Right ventricle myocardium superior (tissue), 1 donor: ENCODE measurements at regions of chr9 and their contacts with region 1.

Region 1: GRCh38 chr9:109779711-109780452 is at the start of gene PALM2AKAP2:
- DNase-seq: peak; percentile 86
- ATAC-seq: peak; percentile 95
- total RNA-seq, gene PALM2AKAP2: 87.5 TPM

Region 2: DNA sequence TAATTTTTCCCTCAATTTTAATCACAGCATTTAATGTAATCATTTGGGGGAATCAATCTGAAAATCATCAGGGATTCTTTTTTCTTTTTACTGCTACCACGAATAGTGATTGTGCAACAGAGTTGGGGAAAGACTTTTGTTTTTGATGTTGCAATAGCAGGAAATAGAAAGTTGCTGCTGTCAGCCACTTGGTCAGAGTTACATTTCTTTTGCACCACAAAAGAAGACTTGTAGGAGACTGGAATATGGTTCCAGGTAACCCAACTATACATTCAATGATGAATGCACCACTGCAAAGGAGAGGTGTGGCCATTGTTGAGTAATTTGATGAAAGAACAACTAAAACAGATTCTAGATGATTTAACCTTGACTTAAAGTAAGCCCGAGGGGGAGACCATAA is 46.2 kb before region 1 on chr9:
- intact Hi-C with region 1: loop called (anchors 2 kb)
- DNase-seq: no peak
- ATAC-seq: peak; percentile 49